Body of pancreas (tissue), 4 donors: ENCODE measurements at regions of chr3 and their contacts with region 1.

Region 1: GRCh38 chr3:187738331-187739093 is 6.8 kb downstream of the BCL6 start:
- DNase-seq: peak; percentile 88 to 94 (median 91)
- ATAC-seq: peak; percentile 72
- H3K4me3 ChIP-seq: peak overlapping the region in 1 of 2 donors; percentile 27
- H3K27ac ChIP-seq: peak overlapping the region; percentile 89 to 99 (median 99)
- H3K4me1 ChIP-seq: peaks cover 45% of the 10 kb centered on the region
- H3K27me3 ChIP-seq: no peaks in the 10 kb centered on the region
- CTCF ChIP-seq: peak; percentile 56 to 95 (median 87)
- POLR2A ChIP-seq: peak; percentile 15 to 47 (median 42)

Region 2: GRCh38 chr3:188954590-188955208 is 1216.2 kb after region 1 on chr3:
- intact Hi-C with region 1: loop called (anchors 5 kb)
- DNase-seq: peak; percentile 82 to 89 (median 86)
- ATAC-seq: peak; percentile 75
- H3K4me3 ChIP-seq: no peak overlapping the region
- H3K27ac ChIP-seq: no peak overlapping the region
- H3K4me1 ChIP-seq: peaks cover 25% of the 10 kb centered on the region
- H3K27me3 ChIP-seq: no peaks in the 10 kb centered on the region
- CTCF ChIP-seq: peak; percentile 70 to 97 (median 96)
- POLR2A ChIP-seq: no peak